Activated CD4-positive, alpha-beta T cell treated with anti-CD3 and anti-CD28 coated beads, Interleukin-2, amount 10 ng/mL, durations not matched to agents 24 days and 14 days (primary cell): ENCODE measurements at regions of chr3 and their contacts with region 1.

Region 1: GRCh38 chr3:27712136-27713077 is 9.7 kb downstream of the EOMES start:
- DNase-seq: peak; percentile 94
- H3K4me3 Mint-ChIP-seq: peak overlapping the region; percentile 94
- H3K27ac Mint-ChIP-seq: peak overlapping the region; percentile 68
- H3K4me1 Mint-ChIP-seq: peaks cover 26% of the 10 kb centered on the region
- H3K27me3 Mint-ChIP-seq: peaks cover 66% of the 10 kb centered on the region

Region 2: GRCh38 chr3:27610800-27611525 is 101.4 kb before region 1 on chr3:
- intact Hi-C with region 1: no loop called
- DNase-seq: no peak
- H3K4me3 Mint-ChIP-seq: no peak overlapping the region
- H3K27ac Mint-ChIP-seq: no peak overlapping the region
- H3K4me1 Mint-ChIP-seq: no peaks in the 10 kb centered on the region
- H3K27me3 Mint-ChIP-seq: no peaks in the 10 kb centered on the region

Region 3: DNA sequence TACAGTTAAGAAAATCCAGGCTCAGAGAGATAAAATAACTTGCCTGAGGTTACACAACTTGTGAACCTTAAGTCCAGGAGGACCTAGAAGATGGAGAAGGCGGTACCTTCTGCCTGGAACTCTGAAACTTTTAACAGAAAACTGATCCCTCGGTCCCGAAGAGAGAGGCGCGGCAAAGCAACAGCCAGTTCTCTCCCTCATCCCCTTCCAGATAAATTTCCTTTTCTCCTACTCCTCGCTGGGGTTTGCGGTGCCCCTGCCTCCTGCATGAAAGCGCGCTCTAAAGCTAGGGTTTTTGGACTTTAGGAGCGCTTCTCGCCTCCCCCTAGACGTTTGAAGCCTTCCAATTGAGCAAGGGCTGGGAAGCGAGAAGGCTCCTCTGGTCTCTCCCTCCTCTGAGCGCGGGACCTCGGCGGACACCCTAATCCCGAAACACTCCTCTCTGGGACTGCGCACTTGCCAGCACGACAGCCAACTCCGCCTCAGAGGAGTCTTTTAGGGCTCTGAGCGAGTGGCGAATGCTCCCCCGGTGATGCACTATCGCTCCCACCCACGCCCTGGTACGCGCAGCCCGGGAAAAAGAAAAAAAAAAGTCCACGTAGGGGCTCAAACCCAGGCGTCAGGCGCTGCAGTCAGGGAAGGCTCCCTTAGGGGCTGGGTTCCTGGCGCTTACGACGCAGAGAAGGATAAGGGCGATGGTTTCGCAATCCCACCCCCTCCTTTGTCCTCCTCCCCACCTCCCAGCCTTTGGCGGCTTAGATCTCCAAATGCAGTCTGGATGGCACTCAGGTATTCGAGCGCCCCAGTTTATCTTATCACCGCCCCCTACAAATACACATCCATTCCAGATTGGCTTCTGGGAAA is 17.6 kb after region 1 on chr3:
- intact Hi-C with region 1: loop called (anchors 1 kb)
- DNase-seq: no peak
- H3K4me3 Mint-ChIP-seq: peak overlapping the region; percentile 73
- H3K27ac Mint-ChIP-seq: peak overlapping the region; percentile 47
- H3K4me1 Mint-ChIP-seq: peaks cover 28% of the 10 kb centered on the region
- H3K27me3 Mint-ChIP-seq: peaks cover 76% of the 10 kb centered on the region

Region 4: GRCh38 chr3:28241221-28242160 is 529.1 kb after region 1 on chr3 and contains the start of gene CMC1:
- intact Hi-C with region 1: loop called (anchors 2 kb)
- DNase-seq: peak; percentile 97
- H3K4me3 Mint-ChIP-seq: peak within 1 kb of the TSS; percentile 94
- H3K27ac Mint-ChIP-seq: peak within 1 kb of the TSS; percentile 93
- H3K4me1 Mint-ChIP-seq: peaks cover 31% of the 10 kb centered on the region
- H3K27me3 Mint-ChIP-seq: no peaks in the 10 kb centered on the region
- total RNA-seq, gene CMC1: 21.3 and 23.2 TPM in 2 replicates

Region 5: GRCh38 chr3:28286595-28286994 is 574.2 kb after region 1 on chr3:
- intact Hi-C with region 1: loop called (anchors 1 kb)
- DNase-seq: no peak
- H3K4me3 Mint-ChIP-seq: no peak overlapping the region
- H3K27ac Mint-ChIP-seq: no peak overlapping the region
- H3K4me1 Mint-ChIP-seq: peaks cover 12% of the 10 kb centered on the region
- H3K27me3 Mint-ChIP-seq: no peaks in the 10 kb centered on the region

Region 6: DNA sequence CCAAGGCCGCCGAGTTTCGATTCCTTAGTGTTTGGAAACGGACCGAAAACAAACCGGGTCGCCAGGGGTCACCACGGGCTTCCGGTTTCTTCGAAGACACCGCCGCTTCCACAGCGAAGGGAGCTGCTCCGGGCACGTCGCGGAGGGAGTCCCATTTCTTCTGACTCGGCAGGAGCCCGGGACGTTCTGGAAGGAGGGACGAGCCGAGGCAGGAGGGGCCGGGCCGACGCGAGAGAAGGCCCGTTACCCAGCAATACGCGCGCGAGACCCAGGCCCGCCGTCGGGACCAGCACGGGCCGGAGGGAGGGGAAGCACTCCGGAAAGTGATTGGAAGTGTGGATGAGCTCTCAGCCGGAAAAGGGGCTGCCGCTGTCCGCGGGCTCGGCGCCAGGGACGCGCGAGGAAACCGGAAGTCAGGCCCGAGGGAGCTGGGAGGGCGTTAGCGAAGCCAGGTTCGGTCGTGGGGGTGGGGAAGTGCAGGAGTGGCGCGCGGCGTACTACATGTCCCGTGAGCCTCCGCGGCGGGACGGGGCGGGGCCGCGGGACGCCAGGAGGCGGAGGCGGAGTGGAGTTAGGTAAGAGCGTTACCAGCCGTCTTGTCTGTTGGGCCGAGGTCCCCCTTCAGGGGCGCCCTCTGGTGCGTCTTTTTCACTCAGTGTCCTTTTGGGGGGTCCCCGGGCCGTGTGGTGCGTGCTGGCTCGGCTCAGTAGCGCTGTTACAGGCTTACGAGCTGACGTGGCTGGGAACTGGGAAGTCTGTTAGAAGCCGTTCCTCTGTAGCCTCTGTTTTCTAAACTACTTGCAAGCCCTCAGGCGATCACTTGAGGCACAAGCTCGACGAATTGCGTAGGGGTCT is 636.4 kb after region 1 on chr3 and contains the starts of genes AZI2 and ZCWPW2:
- intact Hi-C with region 1: loop called (anchors 5 kb)
- DNase-seq: peak; percentile 98
- H3K4me3 Mint-ChIP-seq: peak within 1 kb of the TSS; percentile 98
- H3K27ac Mint-ChIP-seq: peak within 1 kb of the TSS; percentile 96
- H3K4me1 Mint-ChIP-seq: peaks cover 41% of the 10 kb centered on the region
- H3K27me3 Mint-ChIP-seq: no peaks in the 10 kb centered on the region
- total RNA-seq, gene AZI2: 35.6 and 38.7 TPM in 2 replicates
- total RNA-seq, gene ZCWPW2: 0.14 TPM in 1 of 2 replicates, not detected in the other

Region 7: GRCh38 chr3:28575746-28576613 is 863.6 kb after region 1 on chr3:
- intact Hi-C with region 1: loop called (anchors 5 kb)
- DNase-seq: no peak
- H3K4me3 Mint-ChIP-seq: no peak overlapping the region
- H3K27ac Mint-ChIP-seq: no peak overlapping the region
- H3K4me1 Mint-ChIP-seq: no peaks in the 10 kb centered on the region
- H3K27me3 Mint-ChIP-seq: peaks cover 54% of the 10 kb centered on the region